Left lung (tissue), 14 donors: ENCODE measurements at regions of chr6 and their contacts with region 1.

Region 1: GRCh38 chr6:30489081-30490025 is at the start of gene HLA-E:
- DNase-seq: peak; percentile 89 to 99 (median 97)
- ATAC-seq: peak; percentile 95
- H3K4me3 ChIP-seq: peak within 1 kb of the TSS; percentile 89 to 100
- H3K27ac ChIP-seq: peak within 1 kb of the TSS; percentile 96 to 99
- H3K4me1 ChIP-seq: peaks cover 16 to 55% of the 10 kb centered on the region in 2 donors
- H3K27me3 ChIP-seq: no peaks in the 10 kb centered on the region
- CTCF ChIP-seq: no peak
- polyA plus RNA-seq, gene HLA-E: 184 to 210 (median 196) TPM

Region 2: GRCh38 chr6:30533460-30534294 is 44.3 kb after region 1 on chr6:
- intact Hi-C with region 1: loop called in 1 of 2 experiments (anchors 5 kb)
- DNase-seq: no peak
- ATAC-seq: no peak
- H3K4me3 ChIP-seq: no peak overlapping the region
- H3K27ac ChIP-seq: peak overlapping the region in 1 of 2 donors; percentile 51
- H3K4me1 ChIP-seq: peaks cover 0 to 38% of the 10 kb centered on the region in 2 donors
- H3K27me3 ChIP-seq: no peaks in the 10 kb centered on the region
- CTCF ChIP-seq: no peak

Region 3: DNA sequence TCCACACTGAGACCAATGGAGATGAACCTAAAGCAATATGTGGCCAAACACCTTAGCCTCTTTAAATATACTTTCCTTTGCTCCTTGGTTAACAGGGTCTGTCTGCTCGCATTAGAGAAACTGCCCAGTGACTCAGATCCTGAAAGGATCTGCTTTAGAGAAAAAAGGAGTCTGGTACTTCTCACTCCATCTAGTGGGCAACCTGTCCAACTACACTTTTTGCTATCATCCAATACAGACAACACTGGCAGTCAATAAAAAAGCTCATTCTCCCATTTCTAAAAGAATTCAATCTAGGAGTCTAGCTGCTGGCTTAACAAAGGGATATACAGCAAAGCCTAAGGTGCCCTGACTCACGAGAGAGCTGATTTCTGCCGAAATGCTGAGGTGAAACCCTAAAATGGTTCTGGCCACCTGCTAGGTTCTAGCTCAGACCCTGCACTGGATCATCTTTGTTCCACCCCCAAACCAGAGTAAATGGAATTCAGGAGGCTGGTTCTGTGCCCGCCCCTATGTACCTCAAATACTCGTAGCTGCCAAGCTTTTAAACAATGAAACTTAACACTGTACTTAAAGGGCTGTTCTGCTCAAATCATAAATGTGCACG is 55.4 kb after region 1 on chr6:
- intact Hi-C with region 1: loop called in 1 of 2 experiments (anchors 5 kb)
- DNase-seq: peak in 1 of 4 donors; percentile 47
- ATAC-seq: peak; percentile 81
- H3K4me3 ChIP-seq: no peak overlapping the region
- H3K27ac ChIP-seq: peak overlapping the region in 1 of 2 donors; percentile 42
- H3K4me1 ChIP-seq: peaks cover 5 to 23% of the 10 kb centered on the region in 2 donors
- H3K27me3 ChIP-seq: peaks cover 0 to 3% of the 10 kb centered on the region in 2 donors
- CTCF ChIP-seq: peak; percentile 60 to 82